Activated CD4-positive, alpha-beta T cell treated with anti-CD3 and anti-CD28 coated beads, Interleukin-2, amount 10 ng/mL, durations not matched to agents 24 days and 14 days (primary cell): ENCODE measurements at regions of chr10 and their contacts with region 1.

Region 1: DNA sequence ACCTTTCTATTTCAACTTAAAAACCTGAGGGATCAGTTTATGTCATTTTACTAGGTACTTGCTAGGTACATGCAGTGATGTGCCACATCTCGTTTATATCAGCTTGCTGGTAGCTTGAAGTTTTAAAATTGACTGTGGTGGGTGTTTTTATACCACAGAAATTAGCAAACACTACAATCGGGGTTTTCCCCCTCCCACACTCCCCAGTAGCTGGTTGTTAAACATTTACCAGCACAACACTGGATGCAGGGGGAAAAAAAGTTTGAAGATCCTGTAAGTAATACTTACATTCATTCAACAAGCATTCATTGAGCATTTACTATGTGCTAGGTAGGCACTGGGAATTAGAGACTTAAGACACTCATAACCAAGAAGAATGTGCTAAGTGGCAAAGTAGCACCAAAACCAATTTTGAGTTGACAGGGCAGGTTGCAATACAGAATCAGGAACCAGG is 32.6 kb downstream of the USP6NL start:
- DNase-seq: no peak
- H3K4me3 Mint-ChIP-seq: no peak overlapping the region
- H3K27ac Mint-ChIP-seq: no peak overlapping the region
- H3K4me1 Mint-ChIP-seq: peaks cover 18% of the 10 kb centered on the region
- H3K27me3 Mint-ChIP-seq: peaks cover 21% of the 10 kb centered on the region

Region 2: GRCh38 chr10:11525503-11525902 is 53.3 kb before region 1 on chr10:
- intact Hi-C with region 1: no loop called
- DNase-seq: no peak
- H3K4me3 Mint-ChIP-seq: no peak overlapping the region
- H3K27ac Mint-ChIP-seq: no peak overlapping the region
- H3K4me1 Mint-ChIP-seq: peaks cover 6% of the 10 kb centered on the region
- H3K27me3 Mint-ChIP-seq: peaks cover 8% of the 10 kb centered on the region

Region 3: GRCh38 chr10:11553773-11554381 is 25.0 kb before region 1 on chr10:
- intact Hi-C with region 1: loop called (anchors 2 kb)
- DNase-seq: peak; percentile 69
- H3K4me3 Mint-ChIP-seq: peak overlapping the region; percentile 4
- H3K27ac Mint-ChIP-seq: peak overlapping the region; percentile 43
- H3K4me1 Mint-ChIP-seq: peaks cover 21% of the 10 kb centered on the region
- H3K27me3 Mint-ChIP-seq: peaks cover 19% of the 10 kb centered on the region

Region 4: DNA sequence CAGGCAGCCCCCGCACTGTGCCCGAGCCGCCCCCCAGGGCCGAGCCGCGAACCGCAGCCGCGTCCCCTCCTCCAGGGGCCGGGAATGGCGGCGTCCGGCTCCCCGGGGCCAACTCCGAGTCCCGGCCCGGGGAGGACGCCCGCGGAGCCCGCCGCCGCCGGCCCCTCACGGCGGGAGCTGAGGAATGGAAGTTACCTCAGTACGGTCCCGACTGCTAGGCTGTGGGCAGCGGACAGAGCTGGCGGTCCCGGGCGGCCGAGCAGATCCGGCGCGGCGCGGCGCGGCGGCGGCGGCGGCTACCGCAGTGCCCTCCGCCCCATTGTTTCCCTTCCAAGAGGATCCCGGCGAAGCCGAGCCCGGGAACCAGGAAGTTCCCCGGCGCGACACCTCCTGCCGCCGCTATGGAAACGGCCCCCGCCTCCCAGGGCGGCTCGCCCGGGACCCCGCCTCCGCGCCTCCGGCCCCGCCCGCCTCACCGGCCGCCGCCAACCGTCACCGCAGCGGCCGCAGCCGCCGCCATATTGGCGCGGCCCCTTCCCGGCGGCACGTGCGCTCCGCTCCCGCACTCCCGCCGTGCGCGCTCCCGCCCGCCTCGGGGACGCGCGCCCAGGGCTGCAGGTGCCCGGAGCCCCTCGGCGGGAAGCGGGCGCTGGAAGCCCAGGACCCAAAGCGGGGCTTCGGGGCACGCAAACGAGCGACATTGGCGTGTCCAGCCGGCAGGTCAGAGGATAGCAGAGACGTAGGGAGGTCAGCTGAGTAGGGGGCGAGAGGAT is 32.6 kb after region 1 on chr10 and contains the start of gene USP6NL:
- intact Hi-C with region 1: loop called (anchors 2 kb)
- DNase-seq: peak; percentile 90
- H3K4me3 Mint-ChIP-seq: peak within 1 kb of the TSS; percentile 85
- H3K27ac Mint-ChIP-seq: peak within 1 kb of the TSS; percentile 72
- H3K4me1 Mint-ChIP-seq: peaks cover 18% of the 10 kb centered on the region
- H3K27me3 Mint-ChIP-seq: peaks cover 57% of the 10 kb centered on the region
- total RNA-seq, gene USP6NL: 0.83 and 0.84 TPM in 2 replicates

Region 5: DNA sequence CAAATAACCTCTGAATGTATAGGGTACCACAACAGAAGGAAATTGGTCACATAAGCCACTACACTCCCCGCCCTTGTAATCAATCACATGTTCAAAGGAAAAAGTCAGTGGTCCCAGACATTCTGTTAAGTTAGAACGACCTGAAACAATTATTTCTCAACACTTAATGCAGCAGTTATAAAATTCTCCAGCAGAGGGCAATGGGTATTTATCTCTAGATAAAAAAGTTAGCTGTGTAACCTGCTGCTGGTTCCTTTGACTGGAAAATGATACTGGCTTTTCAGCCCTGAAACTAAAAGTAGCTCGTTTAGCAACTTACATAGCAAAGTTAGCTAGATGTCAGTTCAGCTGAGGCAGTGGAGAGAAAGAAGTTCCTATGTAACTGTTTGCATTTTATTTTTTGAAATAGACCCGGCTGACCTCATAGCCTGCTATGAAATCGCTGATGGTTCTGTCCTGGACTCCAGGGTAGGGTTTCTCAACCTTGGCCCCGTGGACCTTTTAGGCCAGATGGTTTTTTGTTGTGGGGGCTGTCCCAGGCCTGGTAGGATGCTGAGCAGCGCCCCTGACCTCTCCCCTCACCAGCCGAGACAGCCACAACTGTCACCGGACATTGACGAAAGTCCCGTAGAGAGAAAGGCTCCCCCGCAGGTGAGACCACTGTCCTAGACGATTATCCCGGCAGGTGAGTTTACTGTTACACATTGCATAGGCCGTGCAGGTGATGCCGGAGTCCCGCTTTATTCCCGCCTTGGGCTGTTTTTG is 204.1 kb after region 1 on chr10:
- intact Hi-C with region 1: no loop called
- DNase-seq: peak; percentile 79
- H3K4me3 Mint-ChIP-seq: no peak overlapping the region
- H3K27ac Mint-ChIP-seq: no peak overlapping the region
- H3K4me1 Mint-ChIP-seq: peaks cover 5% of the 10 kb centered on the region
- H3K27me3 Mint-ChIP-seq: peaks cover 6% of the 10 kb centered on the region